ENCODE measurements at regions of chr1 and their contacts with region 1.

Region 1: GRCh38 chr1:23496490-23497181 is 12.7 kb upstream of the ASAP3 start:
- DNase-seq: no peak
- H3K4me3 Mint-ChIP-seq: no peak overlapping the region
- H3K27ac Mint-ChIP-seq: no peak overlapping the region
- H3K4me1 Mint-ChIP-seq: peaks cover 8% of the 10 kb centered on the region
- H3K27me3 Mint-ChIP-seq: peaks cover 3% of the 10 kb centered on the region

Region 2: DNA sequence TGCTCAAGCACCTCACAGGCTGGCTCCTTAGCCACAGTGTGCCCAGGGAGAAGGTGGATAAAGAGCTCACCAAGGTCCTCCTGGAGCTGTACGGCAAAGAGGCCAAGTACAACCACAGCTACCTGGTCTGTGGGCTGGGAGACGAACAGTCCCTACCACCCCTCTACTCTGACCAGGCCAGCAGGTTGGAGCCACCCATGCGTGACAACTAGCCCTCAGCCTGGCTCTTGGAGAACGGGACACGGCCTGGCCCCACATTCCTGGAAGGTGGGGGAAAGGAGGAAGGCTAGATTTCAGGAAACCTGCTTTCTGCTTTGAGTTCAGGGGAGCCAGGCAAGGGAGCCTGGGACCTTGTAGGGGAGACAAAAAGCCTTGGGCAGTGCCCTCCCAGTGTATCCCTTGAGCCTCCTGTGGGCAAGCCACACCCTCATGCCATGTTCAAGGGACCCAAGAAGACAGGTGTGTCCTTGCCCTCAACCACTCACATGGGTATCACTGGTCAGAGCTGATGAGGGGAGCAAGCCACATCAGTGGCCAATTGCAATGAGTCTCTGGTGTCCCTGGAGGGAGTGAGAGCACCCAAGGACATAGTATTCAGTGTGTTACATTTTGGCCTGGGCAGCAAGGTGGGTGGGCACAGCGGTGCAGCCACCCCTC is 355.6 kb before region 1 on chr1:
- CTCF ChIA-PET with region 1: no interaction called
- POLR2A ChIA-PET with region 1: no interaction called
- DNase-seq: no peak
- H3K4me3 Mint-ChIP-seq: no peak overlapping the region
- H3K27ac Mint-ChIP-seq: no peak overlapping the region
- H3K4me1 Mint-ChIP-seq: no peaks in the 10 kb centered on the region
- H3K27me3 Mint-ChIP-seq: no peaks in the 10 kb centered on the region

Region 3: GRCh38 chr1:23484253-23485001 is 12.2 kb before region 1 on chr1:
- CTCF ChIA-PET with region 1: interaction called, 16 read pairs
- POLR2A ChIA-PET with region 1: no interaction called
- DNase-seq: peak; percentile 95
- H3K4me3 Mint-ChIP-seq: peak overlapping the region; percentile 88
- H3K27ac Mint-ChIP-seq: peak overlapping the region; percentile 78
- H3K4me1 Mint-ChIP-seq: peaks cover 18% of the 10 kb centered on the region
- H3K27me3 Mint-ChIP-seq: peaks cover 63% of the 10 kb centered on the region

Region 4: GRCh38 chr1:23507507-23507906 is 10.9 kb after region 1 on chr1:
- CTCF ChIA-PET with region 1: interaction called, 34 read pairs
- POLR2A ChIA-PET with region 1: interaction called, 3 read pairs
- DNase-seq: no peak
- H3K4me3 Mint-ChIP-seq: no peak overlapping the region
- H3K27ac Mint-ChIP-seq: peak overlapping the region; percentile 11
- H3K4me1 Mint-ChIP-seq: no peaks in the 10 kb centered on the region
- H3K27me3 Mint-ChIP-seq: no peaks in the 10 kb centered on the region

Region 5: DNA sequence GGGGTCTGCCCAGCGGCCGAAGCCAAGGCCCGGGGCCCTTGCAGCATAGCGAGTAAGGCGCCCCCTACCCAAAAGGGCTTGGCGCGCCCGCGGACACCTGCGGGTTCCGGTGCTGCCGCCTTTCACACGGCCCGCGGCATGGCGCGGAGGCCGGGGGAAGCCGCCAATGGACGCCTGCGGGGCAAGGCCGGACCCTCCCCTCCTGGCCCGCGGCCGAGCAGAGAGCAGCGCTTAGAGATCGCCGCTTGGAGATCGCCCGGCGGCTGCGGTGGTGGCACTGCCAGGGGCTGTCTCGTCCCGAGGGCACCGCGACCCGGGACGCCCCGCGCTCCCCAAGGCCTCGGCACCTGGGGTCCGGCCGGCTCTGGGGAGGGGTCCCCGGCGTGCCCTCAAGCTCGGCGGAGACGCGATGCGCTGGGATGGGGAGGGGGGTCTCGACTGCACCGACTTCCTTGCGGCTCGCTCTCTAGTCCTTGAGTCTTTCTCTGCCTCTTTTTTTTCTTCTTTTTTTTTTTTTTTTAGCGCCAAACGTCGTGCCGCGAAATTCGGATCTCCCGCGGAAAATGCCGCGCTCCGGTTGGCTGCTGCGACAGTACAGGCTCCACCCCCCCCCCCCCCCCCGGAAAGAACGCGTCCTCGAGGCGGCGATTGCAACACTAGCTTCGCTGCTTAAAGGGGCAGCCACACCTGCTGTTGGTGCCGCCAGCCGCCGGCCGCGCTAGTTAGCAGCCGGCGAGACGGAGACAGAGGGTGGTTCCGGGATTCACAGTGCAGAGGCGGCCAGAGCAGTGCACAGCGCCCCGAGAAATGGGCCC is 34.3 kb after region 1 on chr1 and contains the start of gene E2F2:
- CTCF ChIA-PET with region 1: interaction called, 123 read pairs
- POLR2A ChIA-PET with region 1: interaction called, 5 read pairs
- DNase-seq: peak; percentile 88
- H3K4me3 Mint-ChIP-seq: peak within 1 kb of the TSS; percentile 98
- H3K27ac Mint-ChIP-seq: peak within 1 kb of the TSS; percentile 95
- H3K4me1 Mint-ChIP-seq: peaks cover 76% of the 10 kb centered on the region
- H3K27me3 Mint-ChIP-seq: no peaks in the 10 kb centered on the region
- total RNA-seq, gene E2F2: 107 to 112 TPM

Region 6: DNA sequence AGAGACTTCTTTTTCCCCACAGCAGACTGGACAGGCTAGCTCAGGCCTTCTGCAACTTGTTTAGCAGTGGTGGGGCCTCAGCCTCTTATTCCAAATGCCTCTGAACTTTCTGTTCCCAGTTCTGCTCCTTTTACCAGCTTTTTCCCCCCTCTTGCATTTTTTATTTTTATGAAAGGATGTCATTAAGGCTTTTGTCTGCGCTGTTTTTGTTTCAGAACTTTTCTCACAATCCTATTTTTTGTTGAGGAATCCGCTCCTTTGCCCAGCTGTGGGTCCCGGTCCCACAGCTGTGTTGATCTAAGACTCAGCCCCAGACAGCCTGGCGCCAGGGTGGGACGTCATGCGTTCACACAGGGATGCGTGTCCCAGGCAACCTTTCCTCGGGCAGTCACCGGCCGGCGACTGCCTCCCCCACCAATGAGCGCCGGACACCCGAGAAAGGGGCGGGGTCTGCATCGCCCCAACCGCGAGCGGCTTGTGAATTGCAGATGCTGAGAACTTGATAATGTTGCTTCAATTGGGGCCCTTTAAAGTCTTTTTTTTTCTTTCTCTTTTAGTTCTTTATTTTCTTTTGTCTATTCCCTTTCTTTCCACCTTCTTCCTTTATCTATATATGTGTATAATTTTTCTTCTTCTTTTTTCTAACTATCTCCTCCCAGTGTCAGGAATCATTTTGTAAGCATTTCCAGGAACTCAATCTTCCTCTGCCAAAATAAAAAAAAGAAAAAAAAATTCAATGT is 65.7 kb after region 1 on chr1:
- CTCF ChIA-PET with region 1: no interaction called
- POLR2A ChIA-PET with region 1: no interaction called
- DNase-seq: peak; percentile 33
- H3K4me3 Mint-ChIP-seq: no peak overlapping the region
- H3K27ac Mint-ChIP-seq: no peak overlapping the region
- H3K4me1 Mint-ChIP-seq: peaks cover 53% of the 10 kb centered on the region
- H3K27me3 Mint-ChIP-seq: peaks cover 45% of the 10 kb centered on the region

Measured in activated CD4-positive, alpha-beta T cell treated with anti-CD3 and anti-CD28 coated beads, Interleukin-2, amount 10 ng/mL, durations not matched to agents 7 days and 5 days (primary cell).